ENCODE measurements at regions of chr2 and their contacts with region 1.

Region 1: DNA sequence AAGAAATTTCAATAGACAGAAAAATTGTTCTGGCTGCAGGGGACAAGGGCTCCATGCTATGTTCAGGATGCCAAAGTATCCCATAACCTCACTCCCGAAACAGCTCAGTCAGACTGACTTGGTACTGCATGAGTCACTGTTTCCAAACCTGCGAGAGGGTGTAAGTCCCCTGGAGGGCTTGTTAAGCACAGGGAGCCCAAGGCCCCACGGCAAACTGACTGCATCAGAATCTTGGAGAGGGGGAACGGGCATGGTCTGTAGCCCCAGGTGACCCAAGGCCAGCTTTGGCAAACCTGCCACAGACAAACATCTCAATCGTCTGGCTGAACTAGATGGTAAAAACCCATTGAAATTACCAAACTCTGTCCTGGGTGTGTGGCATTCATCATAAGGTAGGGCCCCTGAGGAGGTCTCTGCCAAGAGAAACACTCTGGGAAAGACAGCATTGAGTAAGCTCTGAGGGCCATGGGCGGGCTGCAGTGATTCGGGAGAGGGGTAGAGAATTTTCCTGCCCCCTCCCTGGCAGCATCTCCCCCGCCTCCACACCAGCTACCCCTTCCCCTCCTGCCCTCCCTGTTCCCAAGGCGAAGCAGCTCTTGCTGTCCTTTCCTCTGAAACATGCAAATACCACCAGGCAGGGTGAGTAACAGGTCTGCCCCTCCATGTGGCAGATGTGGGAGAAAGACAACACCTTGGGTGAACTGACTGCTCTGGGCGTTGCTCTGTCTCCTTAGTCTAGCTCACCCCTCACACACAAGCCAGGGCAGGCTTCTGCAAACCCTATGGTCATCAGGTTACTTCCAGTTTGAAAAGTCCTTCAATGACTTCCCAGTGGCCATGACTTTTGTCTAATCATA is 274.7 kb upstream of the SIX2 start:
- DNase-seq: peak; percentile 79 to 97
- H3K4me3 ChIP-seq: peak overlapping the region; percentile 10; the same call in 1 of the 2 replicates
- H3K27ac ChIP-seq: peak overlapping the region; percentile 94
- H3K4me1 ChIP-seq: peaks cover 62% of the 10 kb centered on the region
- H3K27me3 ChIP-seq: no peaks in the 10 kb centered on the region
- CTCF ChIP-seq: no peak

Region 2: DNA sequence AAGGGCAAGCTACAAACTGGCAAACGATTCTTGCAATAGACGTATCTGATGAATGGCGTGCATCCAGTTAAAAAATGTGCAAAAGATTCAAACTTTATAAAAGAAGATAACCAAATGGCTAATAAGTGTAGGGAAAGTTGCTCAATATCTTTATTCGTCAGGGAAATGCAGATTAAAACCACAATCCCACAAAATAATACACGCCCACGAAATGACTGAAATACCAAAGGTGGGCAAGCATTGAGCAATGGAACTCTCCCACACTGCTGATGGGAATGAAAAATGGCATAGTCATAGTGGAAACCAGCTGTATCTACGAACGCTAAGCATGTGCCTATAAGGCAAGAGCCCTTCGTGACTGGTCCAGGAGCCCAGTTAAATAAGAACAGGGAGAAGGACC is 106.1 kb before region 1 on chr2:
- CTCF ChIA-PET with region 1: no interaction called
- POLR2A ChIA-PET with region 1: no interaction called
- intact Hi-C with region 1: loop called (anchors 1 kb)
- DNase-seq: peak; percentile 70 to 96
- H3K4me3 ChIP-seq: no peak overlapping the region
- H3K27ac ChIP-seq: peak overlapping the region; percentile 86
- H3K4me1 ChIP-seq: peaks cover 67% of the 10 kb centered on the region
- H3K27me3 ChIP-seq: no peaks in the 10 kb centered on the region
- CTCF ChIP-seq: no peak

Region 3: GRCh38 chr2:45220227-45220626 is 63.8 kb before region 1 on chr2:
- CTCF ChIA-PET with region 1: no interaction called
- POLR2A ChIA-PET with region 1: interaction called, 3 read pairs
- intact Hi-C with region 1: loop called (anchors 2 kb)
- DNase-seq: peak; percentile 24 to 47
- H3K4me3 ChIP-seq: no peak overlapping the region
- H3K27ac ChIP-seq: no peak overlapping the region
- H3K4me1 ChIP-seq: peaks cover 30% of the 10 kb centered on the region
- H3K27me3 ChIP-seq: no peaks in the 10 kb centered on the region
- CTCF ChIP-seq: no peak